ENCODE measurements at regions of chr1 and their contacts with region 1.

Region 1: DNA sequence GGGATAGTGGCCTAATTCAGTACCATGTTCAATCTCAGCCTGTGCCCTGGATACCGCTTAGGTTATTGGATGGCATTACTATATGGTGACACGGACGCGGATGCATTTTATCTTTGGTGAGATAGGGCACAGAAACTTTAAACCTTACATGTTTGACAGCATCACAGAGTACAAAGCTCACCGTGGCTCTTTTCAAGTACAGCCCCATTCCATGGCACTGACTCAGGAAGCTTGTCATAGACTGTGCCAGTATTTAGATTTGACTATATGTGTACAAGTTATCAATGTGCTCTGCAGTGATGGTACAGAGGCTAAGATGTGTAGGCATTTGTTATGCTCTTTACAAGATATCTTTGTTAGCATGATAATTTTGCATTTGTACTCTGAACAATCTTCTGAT is 169.0 kb downstream of the RYR2 start:
- DNase-seq: no peak
- ATAC-seq: no peak
- H3K4me3 ChIP-seq: no peak overlapping the region
- H3K27ac ChIP-seq: no peak overlapping the region
- H3K4me1 ChIP-seq: no peaks in the 10 kb centered on the region
- H3K27me3 ChIP-seq: no peaks in the 10 kb centered on the region
- CTCF ChIP-seq: no peak
- POLR2A ChIP-seq: no peak
- RAD21 ChIP-seq: no peak

Region 2: DNA sequence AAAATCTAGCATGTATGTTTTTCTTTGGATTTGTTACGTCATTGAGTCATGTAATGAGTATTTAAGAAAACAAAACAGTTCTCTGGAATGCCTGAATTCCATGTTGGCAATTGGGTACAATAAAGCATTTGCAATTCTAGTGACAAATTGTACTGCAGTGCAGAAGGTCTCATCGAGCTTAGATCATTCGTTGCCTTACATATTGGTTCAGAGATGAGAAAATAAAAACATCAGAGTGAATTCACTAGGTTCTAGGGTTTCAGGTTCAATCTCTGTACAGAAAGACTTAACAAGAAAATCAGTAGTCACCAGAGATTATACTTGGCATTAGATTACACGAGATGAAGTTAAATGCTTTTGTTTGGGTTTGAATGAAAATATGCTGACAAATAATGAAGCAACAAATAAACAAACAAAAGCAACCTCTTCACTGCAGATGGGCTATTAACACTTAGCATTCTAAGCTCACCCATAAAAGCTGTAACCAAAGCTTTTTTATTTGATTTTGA is 44.4 kb before region 1 on chr1:
- CTCF ChIA-PET with region 1: no interaction called
- POLR2A ChIA-PET with region 1: no interaction called
- dilution Hi-C with region 1: no loop called
- in situ Hi-C with region 1: no loop called
- intact Hi-C with region 1: no loop called
- DNase-seq: peak; percentile 25
- ATAC-seq: peak; percentile 44; the same call in 1 of the 2 replicates
- H3K4me3 ChIP-seq: no peak overlapping the region
- H3K27ac ChIP-seq: no peak overlapping the region
- H3K4me1 ChIP-seq: no peaks in the 10 kb centered on the region
- H3K27me3 ChIP-seq: no peaks in the 10 kb centered on the region
- CTCF ChIP-seq: no peak
- POLR2A ChIP-seq: no peak
- RAD21 ChIP-seq: no peak

Region 3: GRCh38 chr1:237191403-237191802 is 19.6 kb before region 1 on chr1:
- CTCF ChIA-PET with region 1: no interaction called
- POLR2A ChIA-PET with region 1: no interaction called
- dilution Hi-C with region 1: no loop called
- in situ Hi-C with region 1: no loop called
- intact Hi-C with region 1: loop called (anchors 2 kb)
- DNase-seq: no peak
- ATAC-seq: no peak
- H3K4me3 ChIP-seq: no peak overlapping the region
- H3K27ac ChIP-seq: no peak overlapping the region
- H3K4me1 ChIP-seq: no peaks in the 10 kb centered on the region
- H3K27me3 ChIP-seq: no peaks in the 10 kb centered on the region
- CTCF ChIP-seq: no peak
- POLR2A ChIP-seq: no peak
- RAD21 ChIP-seq: no peak

Region 4: GRCh38 chr1:237235091-237235490 is 24.1 kb after region 1 on chr1:
- CTCF ChIA-PET with region 1: no interaction called
- POLR2A ChIA-PET with region 1: no interaction called
- dilution Hi-C with region 1: no loop called
- in situ Hi-C with region 1: no loop called
- intact Hi-C with region 1: no loop called
- DNase-seq: no peak
- ATAC-seq: no peak
- H3K4me3 ChIP-seq: no peak overlapping the region
- H3K27ac ChIP-seq: no peak overlapping the region
- H3K4me1 ChIP-seq: no peaks in the 10 kb centered on the region
- H3K27me3 ChIP-seq: no peaks in the 10 kb centered on the region
- CTCF ChIP-seq: no peak
- POLR2A ChIP-seq: no peak
- RAD21 ChIP-seq: no peak

Measured in IMR-90 (cell line).